ENCODE measurements at regions of chr16 and their contacts with region 1.

Region 1: GRCh38 chr16:84925092-84925772 is 86.1 kb downstream of the ZDHHC7 start:
- DNase-seq: peak; percentile 69 to 79 (median 71)
- H3K4me3 ChIP-seq: no peak overlapping the region
- H3K27ac ChIP-seq: no peak overlapping the region
- H3K4me1 ChIP-seq: no peaks in the 10 kb centered on the region
- H3K27me3 ChIP-seq: peaks cover 0 to 13% (median 0%) of the 10 kb centered on the region in 5 experiments

Region 2: DNA sequence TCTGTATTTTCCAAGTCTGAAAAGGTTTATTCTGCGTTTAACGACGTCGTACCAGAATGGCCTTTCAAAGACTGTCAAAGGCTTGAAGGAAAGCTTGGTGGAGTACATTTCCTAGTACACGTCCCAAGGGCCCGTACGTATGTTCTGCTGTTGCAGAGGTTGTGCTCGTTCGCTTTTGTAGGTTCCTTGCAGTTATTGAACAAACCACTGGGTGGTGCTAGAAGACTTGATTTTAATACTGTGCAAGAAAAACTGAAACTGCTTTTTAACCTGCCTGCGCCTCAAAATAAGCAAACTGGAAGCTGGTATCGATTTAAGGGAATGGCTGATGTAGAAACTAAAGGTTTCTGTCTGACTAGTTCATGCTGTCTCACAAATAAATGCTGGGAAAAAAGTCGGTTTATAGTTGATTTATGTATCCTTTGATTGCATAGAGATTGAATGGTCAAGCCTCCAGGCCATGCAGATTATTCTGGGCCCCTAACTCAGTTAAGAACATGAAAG is 170.8 kb before region 1 on chr16:
- CTCF ChIA-PET with region 1: interaction called, 34 read pairs
- POLR2A ChIA-PET with region 1: interaction called, 3 read pairs
- DNase-seq: peak; percentile 88 to 93 (median 91)
- H3K4me3 ChIP-seq: peak overlapping the region in 2 of 7 experiments; percentile 34 to 43
- H3K27ac ChIP-seq: no peak overlapping the region
- H3K4me1 ChIP-seq: peaks cover 37 to 68% (median 49%) of the 10 kb centered on the region in 4 experiments
- H3K27me3 ChIP-seq: no peaks in the 10 kb centered on the region

Region 3: GRCh38 chr16:84947022-84947421 is 21.8 kb after region 1 on chr16:
- CTCF ChIA-PET with region 1: interaction called, 121 read pairs
- POLR2A ChIA-PET with region 1: no interaction called
- DNase-seq: peak; percentile 81 to 93 (median 92)
- H3K4me3 ChIP-seq: peak overlapping the region in 1 of 7 experiments; percentile 6
- H3K27ac ChIP-seq: no peak overlapping the region
- H3K4me1 ChIP-seq: peaks cover 0 to 40% (median 26%) of the 10 kb centered on the region in 4 experiments
- H3K27me3 ChIP-seq: peaks cover 0 to 44% (median 12%) of the 10 kb centered on the region in 5 experiments

Region 4: DNA sequence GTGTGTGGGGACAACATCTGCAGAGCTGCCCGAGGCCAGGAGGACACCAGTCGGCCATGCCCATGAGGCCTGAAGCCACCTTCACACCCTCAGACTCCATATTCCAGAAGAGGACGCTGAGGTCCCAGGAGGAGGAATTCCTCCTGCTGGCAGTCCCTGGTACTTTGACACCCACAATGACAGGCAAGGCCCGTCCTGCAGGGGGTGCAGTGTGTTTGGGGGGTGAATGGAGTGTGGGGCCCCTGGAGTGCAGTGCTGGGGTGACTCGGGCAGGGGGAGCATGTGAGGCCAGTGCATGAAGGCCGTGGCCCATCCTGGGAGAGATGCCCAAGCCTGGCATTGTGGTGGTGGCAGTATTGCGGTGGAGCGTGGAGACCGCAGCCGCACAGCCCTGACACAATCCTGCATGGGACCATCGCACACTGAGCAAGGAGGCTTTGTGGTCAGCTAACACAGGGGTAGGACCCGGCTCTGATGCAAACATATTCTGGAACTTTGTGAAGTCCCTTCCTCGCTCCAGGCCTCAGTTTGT is 33.9 kb after region 1 on chr16:
- CTCF ChIA-PET with region 1: interaction called, 121 read pairs
- POLR2A ChIA-PET with region 1: interaction called, 4 read pairs
- DNase-seq: peak; percentile 37 to 49 (median 44)
- H3K4me3 ChIP-seq: no peak overlapping the region
- H3K27ac ChIP-seq: no peak overlapping the region
- H3K4me1 ChIP-seq: peaks cover 0 to 15% (median 2%) of the 10 kb centered on the region in 4 experiments
- H3K27me3 ChIP-seq: peaks cover 0 to 8% (median 0%) of the 10 kb centered on the region in 5 experiments

Region 5: GRCh38 chr16:84970447-84971127 is 45.4 kb after region 1 on chr16:
- CTCF ChIA-PET with region 1: interaction called, 207 read pairs
- POLR2A ChIA-PET with region 1: no interaction called
- DNase-seq: peak; percentile 80 to 88 (median 87)
- H3K4me3 ChIP-seq: no peak overlapping the region
- H3K27ac ChIP-seq: no peak overlapping the region
- H3K4me1 ChIP-seq: peaks cover 0 to 8% (median 2%) of the 10 kb centered on the region in 4 experiments
- H3K27me3 ChIP-seq: peaks cover 0 to 9% (median 2%) of the 10 kb centered on the region in 5 experiments

Region 6: GRCh38 chr16:85002608-85003007 is 77.4 kb after region 1 on chr16:
- CTCF ChIA-PET with region 1: no interaction called
- POLR2A ChIA-PET with region 1: no interaction called
- DNase-seq: peak in 2 of 3 donors; percentile 33 to 38
- H3K4me3 ChIP-seq: peak overlapping the region in 1 of 7 experiments; percentile 57
- H3K27ac ChIP-seq: no peak overlapping the region
- H3K4me1 ChIP-seq: peaks cover 0 to 21% (median 11%) of the 10 kb centered on the region in 4 experiments
- H3K27me3 ChIP-seq: no peaks in the 10 kb centered on the region